ENCODE measurements at regions of chr4 and their contacts with region 1.

Region 1: GRCh38 chr4:184343502-184344177 is 126.0 kb upstream of the ENPP6 start:
- DNase-seq: peak; percentile 61

Region 2: GRCh38 chr4:184331268-184331995 is 12.2 kb before region 1 on chr4:
- CTCF ChIA-PET with region 1: interaction called, 4 read pairs
- POLR2A ChIA-PET with region 1: interaction called, 11 read pairs
- DNase-seq: no peak